H1 (cell line): ENCODE measurements at regions of chr14 and their contacts with region 1.

Region 1: GRCh38 chr14:59020382-59020781 is 168.1 kb upstream of the DAAM1 start:
- DNase-seq: no peak
- H3K4me3 ChIP-seq: no peak overlapping the region
- H3K27ac ChIP-seq: no peak overlapping the region
- H3K4me1 ChIP-seq: peaks cover 0 to 3% (median 1%) of the 10 kb centered on the region in 4 experiments; a peak in 1 of 7 replicates
- H3K27me3 ChIP-seq: no peaks in the 10 kb centered on the region
- CTCF ChIP-seq: peak in 2 of 3 experiments; percentile 32 to 54; a peak in 2 of 4 replicates
- EP300 ChIP-seq: no peak
- POLR2A ChIP-seq: no peak
- RAD21 ChIP-seq: peak; percentile 42 to 50; a peak in 3 of 4 replicates

Region 2: DNA sequence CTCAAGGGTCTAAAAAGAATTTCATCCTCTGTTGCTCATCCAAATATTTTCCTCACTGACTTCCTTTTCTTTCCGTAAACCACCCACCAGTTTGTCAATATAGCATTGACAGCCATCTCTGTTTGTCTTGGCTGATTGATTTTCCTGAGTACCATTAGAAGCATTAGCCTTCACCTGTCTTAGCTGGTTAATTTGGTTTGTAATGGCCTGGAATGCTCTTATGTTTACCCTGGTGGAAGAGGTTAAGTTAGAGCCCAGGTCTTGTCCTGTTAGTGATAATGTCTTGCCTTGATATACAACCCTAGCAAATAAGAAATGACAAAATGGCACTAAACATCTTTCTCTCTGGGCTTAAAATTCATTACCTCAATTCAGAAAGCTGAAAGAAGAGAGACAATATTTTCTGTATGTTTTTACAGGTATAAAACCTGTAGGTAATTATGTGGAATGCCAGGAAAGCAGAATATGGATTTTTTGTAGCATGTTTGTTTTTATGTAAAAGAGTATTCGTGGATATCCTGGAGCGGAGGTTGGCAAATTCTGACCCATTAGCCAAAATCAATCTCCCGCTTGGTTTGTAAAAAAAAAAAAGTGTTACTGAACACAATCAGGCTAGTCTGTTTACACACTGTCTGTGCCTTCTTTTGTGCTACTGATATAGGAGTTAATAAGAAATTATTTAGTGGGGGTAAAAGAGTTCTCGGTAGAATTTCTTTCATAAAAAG is 56.3 kb before region 1 on chr14:
- CTCF ChIA-PET with region 1: no interaction called
- POLR2A ChIA-PET with region 1: no interaction called
- DNase-seq: no peak
- H3K4me3 ChIP-seq: no peak overlapping the region
- H3K27ac ChIP-seq: no peak overlapping the region
- H3K4me1 ChIP-seq: 0 out of 7 replicates have a peak, but pooled peaks cover 0 to 3% (median 0%) of the 10 kb centered on the region in 4 experiments
- H3K27me3 ChIP-seq: no peaks in the 10 kb centered on the region
- CTCF ChIP-seq: no peak
- EP300 ChIP-seq: no peak
- POLR2A ChIP-seq: no peak
- RAD21 ChIP-seq: no peak

Region 3: DNA sequence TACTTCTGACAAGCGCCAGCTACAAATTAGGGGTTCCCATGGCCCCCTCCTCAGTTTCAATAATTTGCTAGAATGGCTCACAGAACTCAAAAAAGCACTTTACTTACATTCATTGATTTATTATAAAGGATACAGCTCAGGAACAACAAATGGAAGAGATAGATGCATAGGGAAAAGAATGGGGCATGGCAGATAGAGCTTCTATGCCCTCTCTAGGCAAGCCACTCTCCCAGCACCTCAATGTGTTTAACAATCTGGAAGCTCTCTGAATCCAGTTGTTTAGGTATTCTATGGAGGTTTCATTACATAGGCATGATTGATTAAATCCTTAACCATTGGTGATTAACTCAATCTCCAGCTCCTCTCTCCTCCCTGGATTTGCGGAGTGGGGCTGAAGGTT is 16.4 kb before region 1 on chr14:
- CTCF ChIA-PET with region 1: interaction called, 11 read pairs
- POLR2A ChIA-PET with region 1: no interaction called
- DNase-seq: no peak
- H3K4me3 ChIP-seq: no peak overlapping the region
- H3K27ac ChIP-seq: no peak overlapping the region
- H3K4me1 ChIP-seq: no peaks in the 10 kb centered on the region
- H3K27me3 ChIP-seq: no peaks in the 10 kb centered on the region
- CTCF ChIP-seq: no peak
- EP300 ChIP-seq: no peak
- POLR2A ChIP-seq: no peak
- RAD21 ChIP-seq: peak; percentile 14 to 34; a peak in 3 of 4 replicates